Right ventricle myocardium inferior (tissue), 1 donor: ENCODE measurements at regions of chr10 and their contacts with region 1.

Region 1: DNA sequence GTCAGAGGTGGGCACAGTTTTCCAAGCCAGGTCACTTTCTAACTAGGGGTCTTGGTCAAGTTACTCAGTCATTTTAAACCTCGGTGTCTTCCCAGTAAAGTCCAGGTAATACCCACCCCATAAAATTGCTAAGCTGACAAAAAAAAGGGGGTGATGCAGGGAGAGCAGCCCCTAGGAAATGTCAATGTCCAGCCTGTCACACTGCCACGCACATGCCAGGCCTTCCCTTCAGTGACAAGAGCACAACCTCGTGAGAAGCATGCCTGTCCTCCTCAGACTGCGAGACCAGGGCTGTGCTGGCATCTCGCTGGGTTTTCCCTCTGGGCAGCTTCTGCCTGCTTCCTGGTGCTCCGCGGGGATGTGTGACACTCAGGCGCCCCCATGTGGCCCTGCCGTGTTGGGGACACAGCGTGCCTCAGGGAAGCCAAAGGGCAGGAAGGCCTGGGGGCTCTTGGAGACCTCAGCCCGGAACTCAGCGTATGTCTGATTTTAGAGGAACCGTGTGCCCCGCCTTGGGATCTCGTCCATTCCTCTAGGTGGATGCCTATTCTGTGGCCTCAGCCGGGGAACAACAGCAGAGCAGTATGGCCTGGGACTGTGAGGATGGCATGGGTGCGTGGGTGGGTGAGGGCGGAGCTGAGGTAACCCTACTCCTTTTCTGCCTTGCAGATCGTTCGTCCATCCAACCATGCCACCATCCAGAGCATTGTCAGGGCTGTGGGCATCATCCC is 10.2 kb upstream of the GDF2 start:
- DNase-seq: peak; percentile 92
- ATAC-seq: peak; percentile 90

Region 2: GRCh38 chr10:47024399-47025252 is 287.5 kb before region 1 on chr10:
- intact Hi-C with region 1: loop called (anchors 1 kb)
- DNase-seq: peak; percentile 71
- ATAC-seq: peak; percentile 46

Region 3: DNA sequence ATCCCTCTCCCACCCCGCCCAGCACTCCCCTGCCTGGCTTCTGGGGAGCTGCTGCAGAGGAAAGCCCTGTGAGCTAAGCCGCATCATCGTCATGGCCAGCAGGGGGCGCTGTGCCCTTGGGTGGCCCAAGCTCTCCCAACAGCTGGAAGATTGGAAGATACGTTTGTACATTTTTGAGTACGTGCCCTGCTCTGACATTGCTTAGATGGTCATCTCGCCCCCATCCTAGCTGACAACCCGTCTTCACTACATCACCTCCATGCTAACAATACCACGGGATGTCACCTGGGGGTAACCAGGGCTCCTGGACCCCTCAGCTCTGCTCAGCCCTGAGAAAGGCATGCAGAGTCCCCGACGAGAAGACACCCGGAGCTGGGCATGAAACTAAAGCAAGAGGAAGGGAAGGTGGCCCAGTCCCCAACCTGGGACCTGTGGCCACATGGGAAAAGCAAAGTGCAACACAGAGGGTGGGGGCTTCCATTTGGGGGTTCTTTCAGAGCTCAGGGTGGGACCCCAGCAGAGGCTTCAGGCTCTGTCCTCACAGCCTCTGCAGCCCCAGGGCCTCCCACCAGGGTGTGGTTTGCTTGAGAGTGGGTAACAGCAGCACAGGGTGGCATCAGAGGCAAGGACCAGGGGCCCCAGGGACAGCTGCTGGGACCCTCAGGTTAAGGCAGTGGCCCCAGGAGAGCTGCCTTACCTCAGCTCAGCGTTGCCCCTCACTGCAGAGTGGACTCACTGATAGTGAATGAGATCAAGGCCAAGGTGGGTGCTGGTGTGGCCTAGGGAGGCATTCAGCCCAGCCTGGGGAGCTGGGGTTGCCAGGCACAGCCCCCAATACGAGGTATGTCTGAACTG is 264.2 kb before region 1 on chr10:
- intact Hi-C with region 1: loop called (anchors 1 kb)
- DNase-seq: peak; percentile 85
- ATAC-seq: peak; percentile 51

Region 4: GRCh38 chr10:47165711-47166524 is 146.2 kb before region 1 on chr10:
- intact Hi-C with region 1: loop called (anchors 10 kb)
- DNase-seq: peak; percentile 83
- ATAC-seq: peak; percentile 90